Aorta (tissue), 5 donors: ENCODE measurements at regions of chr11 and their contacts with region 1.

Region 1: DNA sequence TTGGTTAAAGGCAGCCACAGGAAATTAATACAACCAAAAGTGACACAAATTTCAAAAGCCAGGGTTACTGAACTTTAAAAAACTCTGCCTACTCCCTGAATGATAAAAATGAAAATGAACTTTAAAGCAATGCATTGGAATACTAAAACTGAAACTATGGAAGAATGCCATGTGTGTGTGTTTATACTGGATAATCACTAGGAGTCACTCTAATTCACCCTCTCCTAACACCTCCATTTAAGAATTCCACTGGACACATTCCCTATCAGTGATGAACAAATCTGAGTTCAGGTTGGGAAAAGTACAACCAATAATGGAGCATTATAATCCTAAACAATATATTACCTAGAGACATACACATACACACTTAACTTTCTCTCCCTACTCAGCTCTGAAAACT is 27.5 kb upstream of the PLAAT3 start:
- DNase-seq: no peak
- ATAC-seq: no peak
- H3K4me3 ChIP-seq: no peak overlapping the region
- H3K27ac ChIP-seq: no peak overlapping the region
- H3K4me1 ChIP-seq: no peaks in the 10 kb centered on the region
- H3K27me3 ChIP-seq: no peaks in the 10 kb centered on the region

Region 2: DNA sequence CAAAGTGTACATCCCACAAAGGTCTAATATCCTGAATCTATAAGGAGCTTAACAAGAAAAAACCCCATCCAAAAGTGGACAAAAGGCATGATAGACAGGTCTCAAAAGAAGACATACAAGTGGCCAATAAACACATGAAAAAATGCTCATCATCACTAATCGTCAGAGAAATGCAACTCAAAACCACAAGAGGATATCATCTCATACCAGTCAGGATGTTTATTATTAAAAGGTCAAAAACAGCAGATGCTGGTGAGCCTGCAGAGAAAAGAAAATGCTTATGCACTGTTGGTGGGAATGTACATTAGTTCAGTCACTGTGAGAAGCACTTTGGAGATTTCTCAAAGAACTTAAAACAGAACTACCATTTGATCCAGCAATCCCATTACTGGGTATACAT is 123.2 kb before region 1 on chr11:
- intact Hi-C with region 1: no loop called
- DNase-seq: no peak
- ATAC-seq: no peak
- H3K4me3 ChIP-seq: no peak overlapping the region
- H3K27ac ChIP-seq: no peak overlapping the region
- H3K4me1 ChIP-seq: no peaks in the 10 kb centered on the region
- H3K27me3 ChIP-seq: no peaks in the 10 kb centered on the region

Region 3: GRCh38 chr11:63567044-63567840 is 74.5 kb before region 1 on chr11:
- intact Hi-C with region 1: no loop called
- DNase-seq: no peak
- ATAC-seq: peak; percentile 63
- H3K4me3 ChIP-seq: no peak overlapping the region
- H3K27ac ChIP-seq: no peak overlapping the region
- H3K4me1 ChIP-seq: no peaks in the 10 kb centered on the region
- H3K27me3 ChIP-seq: no peaks in the 10 kb centered on the region

Region 4: DNA sequence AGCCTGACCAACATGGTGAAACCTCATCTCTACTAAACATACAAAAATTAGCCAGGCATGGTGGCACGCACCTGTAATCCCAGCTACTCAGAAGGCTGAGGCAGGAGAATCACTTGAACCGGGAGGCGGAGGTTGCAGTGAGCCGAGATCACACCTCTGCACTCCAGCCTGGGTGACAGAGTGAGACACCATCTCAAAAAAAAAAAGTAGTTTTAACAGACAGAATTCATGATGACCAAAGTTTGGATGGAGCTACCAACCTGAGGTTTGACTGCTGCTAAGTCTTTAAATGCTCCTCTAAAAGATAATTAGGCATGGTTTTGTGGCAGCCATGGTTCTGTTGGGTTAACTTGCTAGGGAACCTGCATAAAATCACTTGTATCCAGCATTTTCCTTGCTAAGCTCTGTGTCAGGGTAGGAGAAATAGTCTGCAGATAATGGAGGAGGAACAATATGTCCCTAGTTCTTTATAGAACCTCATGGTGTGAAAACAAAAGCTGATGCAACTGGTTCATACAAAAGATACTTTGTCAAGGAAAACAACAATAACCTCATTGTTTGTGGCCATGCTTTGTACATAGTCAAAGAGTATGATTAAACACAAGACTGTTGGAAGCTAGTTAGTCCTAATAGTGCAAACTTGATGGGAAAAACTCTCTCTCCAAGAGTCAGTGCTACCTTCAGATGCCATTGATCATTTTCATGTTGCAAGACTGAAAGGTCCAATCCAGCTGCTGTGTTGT is 58.6 kb before region 1 on chr11:
- intact Hi-C with region 1: loop called in 1 of 2 experiments (anchors 10 kb)
- DNase-seq: no peak
- ATAC-seq: no peak
- H3K4me3 ChIP-seq: no peak overlapping the region
- H3K27ac ChIP-seq: no peak overlapping the region
- H3K4me1 ChIP-seq: no peaks in the 10 kb centered on the region
- H3K27me3 ChIP-seq: no peaks in the 10 kb centered on the region